MCF 10A (cell line): ENCODE measurements at regions of chr15 and their contacts with region 1.

Region 1: GRCh38 chr15:31215490-31216214 is 111.0 kb upstream of the KLF13 start:
- DNase-seq: peak; percentile 94
- H3K4me3 Mint-ChIP-seq: peak overlapping the region; percentile 68
- H3K27ac Mint-ChIP-seq: peak overlapping the region; percentile 57
- H3K4me1 Mint-ChIP-seq: peaks cover 16% of the 10 kb centered on the region
- H3K27me3 Mint-ChIP-seq: no peaks in the 10 kb centered on the region
- CTCF ChIP-seq: peak; percentile 80

Region 2: DNA sequence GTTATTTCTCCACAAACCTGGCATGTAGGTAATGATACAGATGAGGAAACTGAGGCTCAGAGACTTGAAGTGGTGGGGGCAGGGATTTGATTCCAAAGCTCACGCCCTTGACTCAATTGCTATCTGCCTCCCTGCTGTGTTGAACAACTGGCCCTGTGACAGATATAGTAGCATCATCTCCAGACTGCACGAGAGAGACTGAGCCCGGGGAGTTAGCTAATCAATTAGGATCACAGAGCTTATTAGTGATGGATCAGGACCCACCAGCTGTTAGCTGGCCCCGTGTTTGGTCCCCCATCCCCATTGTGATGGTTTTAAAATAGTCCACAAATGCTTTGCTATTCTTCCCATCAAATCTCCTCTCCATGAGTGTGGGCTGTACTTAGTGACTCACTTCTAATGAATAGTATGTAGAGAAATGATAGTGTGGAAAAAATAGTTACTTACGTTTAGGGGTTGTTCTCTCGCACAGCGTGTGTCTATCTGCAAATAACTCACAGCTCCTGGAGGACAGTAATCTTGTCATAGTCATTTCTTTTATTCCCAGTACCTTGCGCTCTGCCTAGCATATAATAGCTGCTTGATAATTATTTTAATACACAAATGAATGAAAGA is 36.6 kb after region 1 on chr15:
- CTCF ChIA-PET with region 1: interaction called, 10 read pairs
- POLR2A ChIA-PET with region 1: interaction called, 4 read pairs
- intact Hi-C with region 1: no loop called
- DNase-seq: no peak
- H3K4me3 Mint-ChIP-seq: no peak overlapping the region
- H3K27ac Mint-ChIP-seq: no peak overlapping the region
- H3K4me1 Mint-ChIP-seq: peaks cover 12% of the 10 kb centered on the region
- H3K27me3 Mint-ChIP-seq: no peaks in the 10 kb centered on the region
- CTCF ChIP-seq: no peak

Region 3: GRCh38 chr15:31265871-31266711 is 50.4 kb after region 1 on chr15:
- CTCF ChIA-PET with region 1: interaction called, 3 read pairs
- POLR2A ChIA-PET with region 1: interaction called, 14 read pairs
- intact Hi-C with region 1: loop called (anchors 1 kb)
- DNase-seq: no peak
- H3K4me3 Mint-ChIP-seq: no peak overlapping the region
- H3K27ac Mint-ChIP-seq: no peak overlapping the region
- H3K4me1 Mint-ChIP-seq: peaks cover 29% of the 10 kb centered on the region
- H3K27me3 Mint-ChIP-seq: no peaks in the 10 kb centered on the region
- CTCF ChIP-seq: no peak

Region 4: GRCh38 chr15:31326156-31326732 is 110.6 kb after region 1 on chr15:
- CTCF ChIA-PET with region 1: interaction called, 14 read pairs
- POLR2A ChIA-PET with region 1: interaction called, 59 read pairs
- intact Hi-C with region 1: loop called (anchors 1 kb)
- DNase-seq: peak; percentile 97
- H3K4me3 Mint-ChIP-seq: peak overlapping the region; percentile 95
- H3K27ac Mint-ChIP-seq: no peak overlapping the region
- H3K4me1 Mint-ChIP-seq: peaks cover 19% of the 10 kb centered on the region
- H3K27me3 Mint-ChIP-seq: no peaks in the 10 kb centered on the region
- CTCF ChIP-seq: no peak